Activated CD4-positive, alpha-beta memory T cell treated with anti-CD3 and anti-CD28 coated beads for 36 hours (primary cell): ENCODE measurements at regions of chr12 and their contacts with region 1.

Region 1: GRCh38 chr12:71938728-71939385 is at the start of gene TPH2:
- DNase-seq: peak; percentile 73
- H3K4me3 Mint-ChIP-seq: no peak within 1 kb of the TSS
- H3K27ac Mint-ChIP-seq: no peak within 1 kb of the TSS
- H3K4me1 Mint-ChIP-seq: peaks cover 6% of the 10 kb centered on the region
- H3K27me3 Mint-ChIP-seq: peaks cover 61% of the 10 kb centered on the region
- total RNA-seq, gene TPH2: not detected

Region 2: DNA sequence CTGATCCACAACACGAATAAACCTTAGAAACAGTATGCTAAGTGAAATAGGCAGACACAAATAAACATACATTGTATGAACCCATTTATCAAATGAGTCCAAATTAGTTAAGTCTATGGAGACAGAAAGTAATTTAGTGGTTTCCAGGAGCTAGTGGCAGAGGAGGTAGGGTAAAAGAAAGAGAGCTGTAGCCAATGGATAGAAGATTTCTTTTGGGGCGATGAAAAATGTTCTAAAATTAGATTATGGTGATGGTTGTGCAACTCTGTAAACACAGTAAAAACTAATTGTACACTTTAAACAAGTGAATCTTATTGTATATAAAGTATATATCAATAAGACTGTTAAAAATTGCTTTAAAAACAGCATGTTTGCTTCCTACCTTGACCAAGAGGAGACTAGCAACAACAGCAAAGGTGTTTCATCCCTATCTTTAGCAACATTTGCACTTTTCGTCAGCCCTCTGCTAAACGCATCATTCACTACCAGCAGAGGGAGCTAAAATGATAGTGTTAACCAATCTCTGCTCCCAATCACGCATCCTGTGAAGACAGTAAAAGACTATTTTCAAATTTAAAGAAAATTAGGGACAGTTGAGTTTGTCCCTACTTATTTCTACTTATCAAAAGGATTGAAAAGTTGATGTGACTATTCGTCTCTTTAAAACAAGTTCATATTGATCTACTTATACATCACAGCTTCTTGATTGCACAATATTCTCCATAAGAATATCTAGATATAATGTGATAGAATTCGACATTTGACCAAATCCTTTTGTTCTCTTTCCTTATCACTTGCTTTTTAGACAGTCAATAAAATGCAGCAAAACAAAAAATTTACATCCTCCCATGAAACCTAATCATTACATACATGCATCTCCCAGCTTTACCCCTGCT is 523.3 kb before region 1 on chr12:
- CTCF ChIA-PET with region 1: no interaction called
- POLR2A ChIA-PET with region 1: no interaction called
- intact Hi-C with region 1: loop called (anchors 5 kb)
- DNase-seq: peak; percentile 16
- H3K4me3 Mint-ChIP-seq: no peak overlapping the region
- H3K27ac Mint-ChIP-seq: no peak overlapping the region
- H3K4me1 Mint-ChIP-seq: no peaks in the 10 kb centered on the region
- H3K27me3 Mint-ChIP-seq: no peaks in the 10 kb centered on the region

Region 3: DNA sequence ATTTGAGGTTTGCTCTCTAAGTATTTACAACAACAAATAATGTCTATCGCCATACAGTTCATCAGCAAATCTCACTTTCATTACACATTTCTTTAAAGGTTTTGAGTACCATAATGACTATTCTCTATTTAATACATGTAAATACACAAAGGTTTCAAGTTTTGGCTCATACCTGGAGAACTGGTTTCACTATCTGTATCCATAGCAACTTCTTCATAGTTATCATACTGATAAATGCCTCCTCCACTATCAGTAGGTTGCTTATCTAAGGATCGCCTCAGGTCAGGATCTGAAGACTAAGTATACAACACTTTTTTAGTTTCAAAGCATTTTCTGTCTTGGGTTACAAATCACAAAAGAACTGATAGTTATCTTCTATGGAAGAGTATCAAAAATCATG is 296.6 kb before region 1 on chr12:
- CTCF ChIA-PET with region 1: no interaction called
- POLR2A ChIA-PET with region 1: no interaction called
- intact Hi-C with region 1: loop called (anchors 5 kb)
- DNase-seq: no peak
- H3K4me3 Mint-ChIP-seq: no peak overlapping the region
- H3K27ac Mint-ChIP-seq: peak overlapping the region; percentile 65
- H3K4me1 Mint-ChIP-seq: peaks cover 55% of the 10 kb centered on the region
- H3K27me3 Mint-ChIP-seq: no peaks in the 10 kb centered on the region

Region 4: DNA sequence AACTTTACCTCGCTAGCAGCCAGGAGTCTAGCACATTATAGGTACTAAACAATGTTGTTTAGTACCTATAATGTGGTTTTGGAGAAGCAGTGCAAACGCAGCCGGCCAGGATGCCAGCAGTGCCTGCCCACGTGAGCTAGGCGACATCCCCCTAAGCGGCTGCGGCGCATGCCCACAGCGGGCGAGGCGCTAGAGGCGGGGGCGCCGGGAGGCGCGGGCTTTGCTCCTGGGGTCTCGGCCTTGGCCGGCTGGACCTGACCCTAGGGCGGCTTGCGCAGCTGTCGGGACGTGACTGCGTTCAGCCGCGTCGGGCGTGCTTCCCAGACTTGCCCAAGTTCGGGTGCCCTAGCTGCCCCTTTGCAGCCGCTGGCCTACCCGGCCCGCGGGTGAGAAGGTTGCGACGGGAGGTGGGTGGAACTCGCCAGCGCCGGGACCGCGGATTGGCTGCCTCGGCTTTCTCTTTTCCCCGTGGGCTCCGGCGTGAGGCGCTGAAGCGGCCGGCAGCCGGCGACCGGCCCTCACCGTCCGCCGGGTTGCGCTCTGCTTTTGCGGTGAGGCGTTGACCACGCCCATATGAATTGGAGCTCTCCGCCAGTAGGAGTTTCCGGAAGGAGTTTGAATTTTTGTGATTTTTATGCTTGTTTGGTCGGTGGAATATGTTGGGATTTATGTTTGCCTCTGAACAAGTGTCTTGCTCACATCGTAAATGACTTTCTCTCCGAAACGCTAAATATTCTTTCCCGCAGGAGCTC is 252.8 kb before region 1 on chr12 and contains the start of gene TMEM19:
- CTCF ChIA-PET with region 1: no interaction called
- POLR2A ChIA-PET with region 1: no interaction called
- intact Hi-C with region 1: loop called (anchors 1 kb)
- DNase-seq: peak; percentile 87
- H3K4me3 Mint-ChIP-seq: peak within 1 kb of the TSS; percentile 96
- H3K27ac Mint-ChIP-seq: peak within 1 kb of the TSS; percentile 92
- H3K4me1 Mint-ChIP-seq: peaks cover 16% of the 10 kb centered on the region
- H3K27me3 Mint-ChIP-seq: no peaks in the 10 kb centered on the region
- total RNA-seq, gene TMEM19: 10.8 to 11.7 TPM

Region 5: GRCh38 chr12:71754461-71755145 is 184.3 kb before region 1 on chr12 and contains the start of gene RAB21:
- CTCF ChIA-PET with region 1: no interaction called
- POLR2A ChIA-PET with region 1: no interaction called
- intact Hi-C with region 1: loop called (anchors 5 kb)
- DNase-seq: peak; percentile 99
- H3K4me3 Mint-ChIP-seq: peak within 1 kb of the TSS; percentile 95
- H3K27ac Mint-ChIP-seq: peak within 1 kb of the TSS; percentile 98
- H3K4me1 Mint-ChIP-seq: peaks cover 35% of the 10 kb centered on the region
- H3K27me3 Mint-ChIP-seq: peaks cover 1% of the 10 kb centered on the region
- total RNA-seq, gene RAB21: 72.7 to 76.8 TPM

Region 6: GRCh38 chr12:71780237-71780822 is 158.5 kb before region 1 on chr12:
- CTCF ChIA-PET with region 1: interaction called, 7 read pairs
- POLR2A ChIA-PET with region 1: no interaction called
- intact Hi-C with region 1: loop called (anchors 1 kb)
- DNase-seq: peak; percentile 46
- H3K4me3 Mint-ChIP-seq: no peak overlapping the region
- H3K27ac Mint-ChIP-seq: peak overlapping the region; percentile 4
- H3K4me1 Mint-ChIP-seq: peaks cover 5% of the 10 kb centered on the region
- H3K27me3 Mint-ChIP-seq: no peaks in the 10 kb centered on the region

Region 7: GRCh38 chr12:71972441-71973074 is 33.7 kb after region 1 on chr12:
- CTCF ChIA-PET with region 1: no interaction called
- POLR2A ChIA-PET with region 1: no interaction called
- intact Hi-C with region 1: loop called (anchors 1 kb)
- DNase-seq: no peak
- H3K4me3 Mint-ChIP-seq: no peak overlapping the region
- H3K27ac Mint-ChIP-seq: no peak overlapping the region
- H3K4me1 Mint-ChIP-seq: peaks cover 10% of the 10 kb centered on the region
- H3K27me3 Mint-ChIP-seq: peaks cover 16% of the 10 kb centered on the region